ENCODE measurements at regions of chr9 and their contacts with region 1.

Region 1: GRCh38 chr9:83622939-83623678 is at the start of gene IDNK:
- DNase-seq: no peak
- H3K4me3 ChIP-seq: peak within 1 kb of the TSS; percentile 79 to 97 (median 94)
- H3K27ac ChIP-seq: peak within 1 kb of the TSS; percentile 87 to 92 (median 88)
- H3K4me1 ChIP-seq: peaks cover 6 to 19% (median 15%) of the 10 kb centered on the region in 4 donors
- H3K27me3 ChIP-seq: no peaks in the 10 kb centered on the region
- CTCF ChIP-seq: no peak
- EP300 ChIP-seq: no peak
- POLR2A ChIP-seq: no peak
- total RNA-seq, gene IDNK: 4.6 to 9.3 (median 5.9) TPM

Region 2: DNA sequence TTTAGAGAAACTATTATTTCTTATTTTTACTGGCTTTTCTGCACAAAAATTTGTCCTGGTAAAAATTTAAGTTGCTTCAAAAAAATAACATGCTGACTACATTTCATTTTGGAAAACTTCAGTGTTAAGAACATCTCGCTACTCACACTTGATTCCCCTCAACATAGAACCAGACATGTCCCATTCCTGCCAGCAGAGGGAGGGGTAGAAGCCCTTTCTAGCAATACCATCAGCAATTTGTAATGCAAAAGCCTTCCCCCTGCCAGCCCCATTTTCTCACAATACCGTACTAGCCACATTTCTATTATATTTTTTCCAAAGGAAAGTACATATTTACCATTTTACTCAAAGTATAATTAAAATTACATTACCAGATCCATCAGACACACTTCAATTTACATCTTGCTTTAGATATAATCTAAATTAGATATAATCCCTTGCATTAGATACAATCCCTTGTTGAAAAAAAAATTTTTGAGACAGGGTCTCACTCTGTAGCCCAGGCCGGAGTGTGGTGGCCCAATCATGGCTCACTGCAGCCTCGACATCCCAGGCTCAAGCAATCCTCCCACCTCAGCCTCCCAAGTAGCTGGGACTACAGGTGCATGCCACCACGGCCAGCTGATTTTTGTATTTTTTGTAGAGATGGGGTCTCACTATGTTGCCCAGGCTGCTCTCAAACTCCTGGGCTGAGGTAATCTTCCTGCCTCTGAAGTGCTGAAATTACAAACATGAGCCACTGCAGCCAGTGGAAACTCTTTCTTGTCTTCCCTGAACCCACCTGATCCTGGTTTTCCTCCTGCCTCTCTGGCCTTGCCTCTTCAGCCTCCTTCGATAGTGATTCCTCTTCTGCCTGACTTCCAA is 39.7 kb before region 1 on chr9:
- intact Hi-C with region 1: no loop called
- DNase-seq: peak; percentile 80
- H3K4me3 ChIP-seq: no peak overlapping the region
- H3K27ac ChIP-seq: no peak overlapping the region
- H3K4me1 ChIP-seq: no peaks in the 10 kb centered on the region
- H3K27me3 ChIP-seq: no peaks in the 10 kb centered on the region
- CTCF ChIP-seq: peak; percentile 53 to 75 (median 59)
- EP300 ChIP-seq: no peak
- POLR2A ChIP-seq: no peak

Region 3: DNA sequence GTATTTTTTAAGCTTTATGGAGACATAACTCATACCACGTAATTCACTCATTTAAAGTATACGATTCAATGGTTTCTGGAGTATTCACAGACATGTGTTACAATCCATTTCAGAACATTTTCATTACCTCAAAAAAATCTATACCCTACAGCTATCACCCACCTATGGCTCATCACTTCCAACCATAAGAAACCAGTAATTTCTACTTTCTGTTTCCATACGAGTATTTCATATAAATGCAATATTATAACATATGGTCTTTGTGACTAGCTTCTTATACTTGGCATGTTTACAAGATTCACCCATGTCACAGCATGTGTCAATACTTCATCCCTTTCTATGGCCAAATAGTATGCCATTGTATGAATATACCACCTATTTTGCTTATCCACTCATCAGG is 65.8 kb after region 1 on chr9:
- intact Hi-C with region 1: no loop called
- DNase-seq: no peak
- H3K4me3 ChIP-seq: no peak overlapping the region
- H3K27ac ChIP-seq: no peak overlapping the region
- H3K4me1 ChIP-seq: peaks cover 19 to 77% (median 57%) of the 10 kb centered on the region in 4 donors
- H3K27me3 ChIP-seq: no peaks in the 10 kb centered on the region
- CTCF ChIP-seq: no peak
- EP300 ChIP-seq: no peak
- POLR2A ChIP-seq: no peak

Region 4: DNA sequence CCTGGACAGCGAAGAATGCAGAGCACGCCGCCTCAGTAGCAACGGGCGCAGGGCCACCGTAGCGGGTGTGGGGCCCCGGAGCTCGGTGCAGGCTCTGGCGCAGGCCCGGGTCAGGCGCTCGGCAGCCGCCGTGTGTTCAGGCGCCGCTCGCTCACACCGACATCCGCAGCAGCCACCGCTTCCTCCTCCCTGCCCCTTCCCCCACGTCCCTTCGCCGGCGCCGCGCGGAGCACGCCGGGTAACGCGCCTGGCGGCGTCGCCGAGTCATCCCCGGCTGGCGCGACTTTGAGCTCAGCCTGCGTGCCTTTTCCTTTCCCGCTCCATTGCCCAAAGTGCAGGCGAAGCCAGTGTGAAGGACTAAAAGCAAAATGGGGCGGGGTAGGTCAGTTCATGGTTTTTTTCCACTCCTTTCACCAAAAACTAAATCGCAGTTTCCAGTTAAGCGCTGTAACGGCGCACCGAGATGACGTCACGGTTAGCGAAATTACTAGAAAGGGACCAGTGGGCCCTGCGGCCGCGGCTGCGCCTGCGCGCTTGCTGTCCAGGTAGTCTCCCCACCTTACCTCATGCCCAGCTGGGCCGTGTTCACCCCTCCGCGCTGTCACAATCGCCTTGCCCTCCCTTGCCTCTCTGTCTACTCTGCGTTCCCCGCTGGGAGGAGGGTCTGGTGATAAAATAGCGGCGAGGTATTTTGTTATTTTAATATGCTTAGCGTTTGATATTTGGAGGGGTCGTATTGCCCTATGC is 84.8 kb after region 1 on chr9 and contains the start of gene UBQLN1:
- intact Hi-C with region 1: loop called (anchors 2 kb)
- DNase-seq: peak; percentile 98
- H3K4me3 ChIP-seq: peak within 1 kb of the TSS; percentile 87 to 97 (median 90)
- H3K27ac ChIP-seq: peak within 1 kb of the TSS; percentile 97 to 99 (median 98)
- H3K4me1 ChIP-seq: peaks cover 23 to 42% (median 40%) of the 10 kb centered on the region in 4 donors
- H3K27me3 ChIP-seq: no peaks in the 10 kb centered on the region
- CTCF ChIP-seq: no peak
- EP300 ChIP-seq: no peak
- POLR2A ChIP-seq: peak; percentile 96
- total RNA-seq, gene UBQLN1: 112 to 123 (median 119) TPM